ENCODE measurements at regions of chr10 and their contacts with region 1.

Region 1: GRCh38 chr10:23158370-23158769 is 33.7 kb upstream of the PTF1A start:
- DNase-seq: peak; percentile 60
- H3K4me3 ChIP-seq: no peak overlapping the region
- H3K27ac ChIP-seq: no peak overlapping the region
- H3K4me1 ChIP-seq: peaks cover 3% of the 10 kb centered on the region
- H3K27me3 ChIP-seq: no peaks in the 10 kb centered on the region
- CTCF ChIP-seq: peak; percentile 70 to 83
- POLR2A ChIP-seq: no peak

Region 2: DNA sequence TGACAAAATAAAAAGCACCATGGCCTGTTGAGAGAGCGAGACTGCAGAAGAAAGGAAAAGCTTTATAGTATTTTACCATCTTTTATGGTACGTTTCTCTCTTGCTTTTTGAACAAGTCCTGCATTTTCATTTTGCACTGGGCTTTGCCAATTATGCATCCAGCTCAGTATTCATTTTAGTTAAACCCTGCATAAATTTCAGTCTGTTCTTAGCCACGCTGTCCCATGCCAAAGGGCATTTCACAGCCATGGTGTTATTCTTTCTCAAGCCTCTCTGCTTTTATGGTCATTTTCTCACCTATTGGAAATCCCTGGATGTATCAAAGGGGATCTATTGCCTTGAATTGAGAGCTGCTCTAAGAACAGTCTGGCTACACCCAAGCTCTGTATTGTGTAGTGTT is 1124.0 kb before region 1 on chr10:
- CTCF ChIA-PET with region 1: no interaction called
- POLR2A ChIA-PET with region 1: no interaction called
- dilution Hi-C with region 1: no loop called
- intact Hi-C with region 1: no loop called
- DNase-seq: no peak
- H3K4me3 ChIP-seq: no peak overlapping the region
- H3K27ac ChIP-seq: no peak overlapping the region
- H3K4me1 ChIP-seq: no peaks in the 10 kb centered on the region
- H3K27me3 ChIP-seq: peaks cover 0 to 10% of the 10 kb centered on the region in 2 experiments
- CTCF ChIP-seq: no peak
- POLR2A ChIP-seq: no peak

Region 3: DNA sequence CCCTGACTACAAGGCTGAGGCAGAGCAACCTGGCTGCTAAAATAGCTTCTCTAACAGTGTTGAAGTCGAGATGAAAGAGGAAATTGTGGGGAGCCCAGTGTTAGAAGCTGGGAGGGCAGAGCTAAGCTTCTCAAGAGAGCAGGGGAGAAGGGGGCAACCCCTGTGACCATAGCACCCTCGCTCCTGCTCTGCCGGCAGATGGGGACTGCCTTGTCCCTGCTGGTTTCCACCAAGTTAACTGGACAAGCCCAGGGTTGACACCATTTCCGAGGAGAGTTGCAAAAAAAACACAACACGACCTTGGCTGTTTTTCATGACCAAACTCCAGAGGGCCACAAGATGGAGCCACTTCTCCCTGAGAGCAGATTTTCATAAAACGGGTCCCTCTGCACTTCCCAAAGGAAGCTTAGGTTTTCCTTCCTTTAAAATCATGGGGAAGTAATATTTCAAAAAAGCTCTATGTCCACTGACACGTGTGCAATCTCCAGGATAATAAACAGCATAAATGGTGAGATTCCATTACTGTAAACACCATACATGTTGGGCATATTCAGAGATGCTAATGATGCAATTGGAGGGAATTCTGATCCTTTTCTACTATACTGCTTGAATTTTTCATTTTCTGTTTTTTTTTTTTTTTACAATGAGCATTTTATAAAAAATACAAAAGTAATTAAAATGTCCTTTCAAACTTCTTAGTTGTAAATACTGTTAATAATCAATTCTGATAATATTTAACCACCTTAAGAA is 584.4 kb before region 1 on chr10:
- CTCF ChIA-PET with region 1: no interaction called
- POLR2A ChIA-PET with region 1: no interaction called
- dilution Hi-C with region 1: no loop called
- intact Hi-C with region 1: no loop called
- DNase-seq: peak; percentile 18
- H3K4me3 ChIP-seq: no peak overlapping the region
- H3K27ac ChIP-seq: no peak overlapping the region
- H3K4me1 ChIP-seq: no peaks in the 10 kb centered on the region
- H3K27me3 ChIP-seq: no peaks in the 10 kb centered on the region
- CTCF ChIP-seq: peak; percentile 44 to 52
- POLR2A ChIP-seq: no peak

Region 4: GRCh38 chr10:23293145-23293724 is 134.9 kb after region 1 on chr10:
- CTCF ChIA-PET with region 1: interaction called, 60 read pairs
- POLR2A ChIA-PET with region 1: no interaction called
- dilution Hi-C with region 1: no loop called
- intact Hi-C with region 1: loop called (anchors 2 kb)
- DNase-seq: peak; percentile 33
- H3K4me3 ChIP-seq: no peak overlapping the region
- H3K27ac ChIP-seq: no peak overlapping the region
- H3K4me1 ChIP-seq: no peaks in the 10 kb centered on the region
- H3K27me3 ChIP-seq: no peaks in the 10 kb centered on the region
- CTCF ChIP-seq: peak; percentile 49 to 50
- POLR2A ChIP-seq: no peak

Region 5: GRCh38 chr10:23702977-23703414 is 544.6 kb after region 1 on chr10:
- CTCF ChIA-PET with region 1: no interaction called
- POLR2A ChIA-PET with region 1: no interaction called
- dilution Hi-C with region 1: no loop called
- intact Hi-C with region 1: loop called (anchors 2 kb)
- DNase-seq: peak; percentile 18
- H3K4me3 ChIP-seq: no peak overlapping the region
- H3K27ac ChIP-seq: no peak overlapping the region
- H3K4me1 ChIP-seq: no peaks in the 10 kb centered on the region
- H3K27me3 ChIP-seq: no peaks in the 10 kb centered on the region
- CTCF ChIP-seq: peak; percentile 35 to 59
- POLR2A ChIP-seq: no peak

Region 6: GRCh38 chr10:24360282-24361127 is 1202.1 kb after region 1 on chr10:
- CTCF ChIA-PET with region 1: interaction called, 8 read pairs
- POLR2A ChIA-PET with region 1: no interaction called
- dilution Hi-C with region 1: no loop called
- intact Hi-C with region 1: loop called (anchors 2 kb)
- DNase-seq: peak; percentile 10
- H3K4me3 ChIP-seq: no peak overlapping the region
- H3K27ac ChIP-seq: no peak overlapping the region
- H3K4me1 ChIP-seq: no peaks in the 10 kb centered on the region
- H3K27me3 ChIP-seq: no peaks in the 10 kb centered on the region
- CTCF ChIP-seq: peak; percentile 31 to 39
- POLR2A ChIP-seq: no peak

Region 7: DNA sequence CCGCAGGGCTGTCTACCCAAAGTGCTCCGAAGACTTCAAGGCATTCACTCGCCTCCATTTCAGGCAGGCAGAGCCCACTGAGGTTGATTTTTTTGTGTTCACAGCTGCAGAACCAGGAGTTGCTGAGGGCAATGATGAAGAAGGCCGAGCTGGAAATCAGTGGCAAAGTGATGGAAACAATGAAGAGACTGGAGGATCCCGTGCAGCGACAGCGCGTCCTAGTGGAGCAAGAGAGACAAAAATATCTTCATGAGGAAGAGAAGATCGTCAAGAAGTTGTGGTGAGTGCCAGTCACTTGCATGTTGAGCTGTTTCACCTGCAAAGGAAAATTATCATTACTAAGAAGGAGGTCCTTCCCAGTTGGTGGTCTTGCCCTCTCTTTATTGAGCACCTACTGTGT is 1354.8 kb after region 1 on chr10:
- CTCF ChIA-PET with region 1: interaction called, 37 read pairs
- POLR2A ChIA-PET with region 1: no interaction called
- dilution Hi-C with region 1: no loop called
- intact Hi-C with region 1: loop called (anchors 2 kb)
- DNase-seq: no peak
- H3K4me3 ChIP-seq: no peak overlapping the region
- H3K27ac ChIP-seq: no peak overlapping the region
- H3K4me1 ChIP-seq: no peaks in the 10 kb centered on the region
- H3K27me3 ChIP-seq: no peaks in the 10 kb centered on the region
- CTCF ChIP-seq: peak; percentile 12 to 13
- POLR2A ChIP-seq: no peak

Region 8: GRCh38 chr10:24556750-24557742 is 1398.7 kb after region 1 on chr10:
- CTCF ChIA-PET with region 1: interaction called, 35 read pairs
- POLR2A ChIA-PET with region 1: no interaction called
- dilution Hi-C with region 1: no loop called
- intact Hi-C with region 1: loop called (anchors 2 kb)
- DNase-seq: peak; percentile 59
- H3K4me3 ChIP-seq: no peak overlapping the region
- H3K27ac ChIP-seq: no peak overlapping the region
- H3K4me1 ChIP-seq: peaks cover 2% of the 10 kb centered on the region
- H3K27me3 ChIP-seq: no peaks in the 10 kb centered on the region
- CTCF ChIP-seq: peak; percentile 60 to 61
- POLR2A ChIP-seq: no peak